ENCODE measurements at regions of chr15 and their contacts with region 1.

Region 1: DNA sequence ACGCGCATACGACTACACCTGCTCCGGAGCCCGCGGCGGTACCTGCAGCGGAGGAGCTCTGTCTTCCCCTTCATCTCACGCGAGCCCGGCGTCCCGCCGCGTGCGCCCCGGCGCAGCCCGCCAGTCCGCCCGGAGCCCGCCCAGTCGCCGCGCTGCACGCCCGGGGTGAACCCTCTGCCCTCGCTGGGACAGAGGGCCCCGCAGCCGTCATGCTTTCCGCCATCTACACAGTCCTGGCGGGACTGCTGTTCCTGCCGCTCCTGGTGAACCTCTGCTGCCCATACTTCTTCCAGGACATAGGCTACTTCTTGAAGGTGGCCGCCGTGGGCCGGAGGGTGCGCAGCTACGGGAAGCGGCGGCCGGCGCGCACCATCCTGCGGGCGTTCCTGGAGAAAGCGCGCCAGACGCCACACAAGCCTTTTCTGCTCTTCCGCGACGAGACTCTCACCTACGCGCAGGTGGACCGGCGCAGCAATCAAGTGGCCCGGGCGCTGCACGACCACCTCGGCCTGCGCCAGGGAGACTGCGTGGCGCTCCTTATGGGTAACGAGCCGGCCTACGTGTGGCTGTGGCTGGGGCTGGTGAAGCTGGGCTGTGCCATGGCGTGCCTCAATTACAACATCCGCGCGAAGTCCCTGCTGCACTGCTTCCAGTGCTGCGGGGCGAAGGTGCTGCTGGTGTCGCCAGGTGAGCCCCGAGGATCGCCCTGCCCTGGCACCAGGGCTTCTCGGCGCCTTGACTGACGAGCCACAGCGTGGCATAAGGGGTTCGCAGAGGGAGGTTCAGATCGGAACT is 420 bp downstream of the SLC27A2 start:
- DNase-seq: peak; percentile 85
- H3K4me3 ChIP-seq: peak overlapping the region; percentile 56 to 58
- H3K27ac ChIP-seq: no peak overlapping the region
- H3K4me1 ChIP-seq: peaks cover 0 to 8% of the 10 kb centered on the region in 2 experiments; a peak in 1 of 4 replicates
- H3K27me3 ChIP-seq: no peaks in the 10 kb centered on the region; the same call in 1 of the 2 replicates
- CTCF ChIP-seq: no peak
- EP300 ChIP-seq: no peak
- RAD21 ChIP-seq: no peak

Region 2: GRCh38 chr15:49748791-49749190 is 433.6 kb before region 1 on chr15:
- CTCF ChIA-PET with region 1: no interaction called
- POLR2A ChIA-PET with region 1: no interaction called
- DNase-seq: no peak
- H3K4me3 ChIP-seq: no peak overlapping the region
- H3K27ac ChIP-seq: no peak overlapping the region; a peak in 1 of 4 replicates
- H3K4me1 ChIP-seq: peaks cover 0 to 3% of the 10 kb centered on the region in 2 experiments; a peak in 2 of 4 replicates
- H3K27me3 ChIP-seq: no peaks in the 10 kb centered on the region
- CTCF ChIP-seq: no peak
- EP300 ChIP-seq: no peak
- RAD21 ChIP-seq: no peak

Region 3: GRCh38 chr15:49962044-49962602 is 220.3 kb before region 1 on chr15:
- CTCF ChIA-PET with region 1: no interaction called
- POLR2A ChIA-PET with region 1: no interaction called
- DNase-seq: peak; percentile 35
- H3K4me3 ChIP-seq: no peak overlapping the region
- H3K27ac ChIP-seq: peak overlapping the region in 1 of 2 experiments; percentile 43; a peak in 2 of 4 replicates
- H3K4me1 ChIP-seq: no peaks in the 10 kb centered on the region; a peak in 1 of 4 replicates
- H3K27me3 ChIP-seq: no peaks in the 10 kb centered on the region
- CTCF ChIP-seq: no peak
- EP300 ChIP-seq: peak in 1 of 2 experiments; percentile 91; a peak in 2 of 4 replicates
- RAD21 ChIP-seq: 0 out of 2 replicates have a peak, but pooled peaks have one; percentile 12

Region 4: GRCh38 chr15:50083424-50084025 is 98.9 kb before region 1 on chr15:
- CTCF ChIA-PET with region 1: no interaction called
- POLR2A ChIA-PET with region 1: no interaction called
- DNase-seq: no peak
- H3K4me3 ChIP-seq: no peak overlapping the region
- H3K27ac ChIP-seq: no peak overlapping the region
- H3K4me1 ChIP-seq: no peaks in the 10 kb centered on the region
- H3K27me3 ChIP-seq: no peaks in the 10 kb centered on the region
- CTCF ChIP-seq: no peak
- EP300 ChIP-seq: no peak
- RAD21 ChIP-seq: no peak

Region 5: GRCh38 chr15:50315814-50316630 is 133.6 kb after region 1 on chr15:
- CTCF ChIA-PET with region 1: interaction called, 16 read pairs
- POLR2A ChIA-PET with region 1: no interaction called
- DNase-seq: peak; percentile 45
- H3K4me3 ChIP-seq: peak overlapping the region in 1 of 2 experiments; percentile 44; a peak in 1 of 4 replicates
- H3K27ac ChIP-seq: no peak overlapping the region
- H3K4me1 ChIP-seq: no peaks in the 10 kb centered on the region
- H3K27me3 ChIP-seq: no peaks in the 10 kb centered on the region
- CTCF ChIP-seq: peak; percentile 87
- EP300 ChIP-seq: no peak
- RAD21 ChIP-seq: peak; percentile 79

Measured in SK-N-SH (cell line).